ENCODE measurements at regions of chr22 and their contacts with region 1.

Region 1: GRCh38 chr22:50326959-50327710 is at the start of gene DENND6B:
- DNase-seq: peak; percentile 67 to 76 (median 72)
- H3K4me3 ChIP-seq: peak within 1 kb of the TSS; percentile 58 to 83 (median 71)
- H3K27ac ChIP-seq: peak within 1 kb of the TSS in 1 of 2 experiments; percentile 82
- H3K4me1 ChIP-seq: peaks cover 0 to 17% (median 15%) of the 10 kb centered on the region in 4 experiments
- H3K27me3 ChIP-seq: peaks cover 0 to 6% (median 0%) of the 10 kb centered on the region in 5 experiments

Region 2: DNA sequence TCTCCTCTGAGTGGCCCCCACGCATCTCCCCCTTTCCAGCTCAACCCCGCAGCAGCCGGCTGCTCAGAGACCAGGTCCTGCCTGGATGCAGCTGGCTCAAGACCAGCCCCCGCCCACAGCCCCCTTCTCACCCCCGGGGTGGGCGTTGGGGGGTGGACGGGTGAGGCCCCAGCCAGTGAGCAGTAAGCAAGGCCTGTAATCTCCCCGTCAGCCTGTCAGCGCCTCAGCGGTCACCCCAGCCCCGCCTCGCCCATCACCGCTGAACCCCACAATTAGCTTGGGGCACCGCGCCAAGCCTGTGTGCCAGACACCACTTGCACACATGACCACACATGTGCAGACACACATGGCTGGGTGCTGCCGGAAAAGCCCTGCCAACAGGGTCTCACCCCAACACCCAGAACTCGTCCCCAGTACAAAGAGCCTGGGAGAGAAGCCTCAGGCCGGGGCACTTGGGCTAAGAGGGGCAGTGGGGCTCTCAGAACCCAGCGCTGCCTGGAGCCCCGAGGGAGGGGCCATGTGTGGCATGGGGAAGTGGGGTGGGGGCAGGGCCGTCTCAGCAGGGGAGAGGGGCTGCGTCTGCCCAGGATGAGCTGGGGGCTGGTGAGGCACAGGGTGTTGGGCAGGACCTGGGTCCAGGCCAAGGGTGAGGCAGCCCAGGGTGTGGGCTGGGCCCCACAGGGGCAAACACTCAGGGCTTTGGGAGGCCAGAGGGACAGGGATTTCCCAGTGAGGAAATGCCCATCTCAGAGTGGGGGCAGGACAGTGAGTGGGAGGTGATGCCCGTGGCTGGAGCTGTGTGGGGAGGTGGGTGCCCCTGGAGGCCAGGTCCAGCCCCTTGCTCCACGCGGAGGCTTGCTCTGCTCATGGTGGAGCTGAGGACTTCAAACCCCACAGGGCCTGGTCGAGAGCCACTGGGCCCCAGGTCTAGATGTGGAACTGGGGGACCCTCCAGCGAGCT is 25.3 kb before region 1 on chr22:
- CTCF ChIA-PET with region 1: interaction called, 24 read pairs
- POLR2A ChIA-PET with region 1: interaction called, 6 read pairs
- DNase-seq: peak in 1 of 3 donors; percentile 58
- H3K4me3 ChIP-seq: peak overlapping the region in 1 of 7 experiments; percentile 4
- H3K27ac ChIP-seq: no peak overlapping the region
- H3K4me1 ChIP-seq: peaks cover 0 to 86% (median 78%) of the 10 kb centered on the region in 4 experiments
- H3K27me3 ChIP-seq: no peaks in the 10 kb centered on the region

Region 3: GRCh38 chr22:50306753-50307749 is 20.1 kb before region 1 on chr22 and contains the start of gene PLXNB2:
- CTCF ChIA-PET with region 1: interaction called, 24 read pairs
- POLR2A ChIA-PET with region 1: interaction called, 6 read pairs
- DNase-seq: peak; percentile 52 to 76 (median 71)
- H3K4me3 ChIP-seq: peak within 1 kb of the TSS; percentile 59 to 86 (median 80)
- H3K27ac ChIP-seq: peak within 1 kb of the TSS; percentile 40 to 71
- H3K4me1 ChIP-seq: peaks cover 0 to 75% (median 66%) of the 10 kb centered on the region in 4 experiments
- H3K27me3 ChIP-seq: no peaks in the 10 kb centered on the region

Region 4: DNA sequence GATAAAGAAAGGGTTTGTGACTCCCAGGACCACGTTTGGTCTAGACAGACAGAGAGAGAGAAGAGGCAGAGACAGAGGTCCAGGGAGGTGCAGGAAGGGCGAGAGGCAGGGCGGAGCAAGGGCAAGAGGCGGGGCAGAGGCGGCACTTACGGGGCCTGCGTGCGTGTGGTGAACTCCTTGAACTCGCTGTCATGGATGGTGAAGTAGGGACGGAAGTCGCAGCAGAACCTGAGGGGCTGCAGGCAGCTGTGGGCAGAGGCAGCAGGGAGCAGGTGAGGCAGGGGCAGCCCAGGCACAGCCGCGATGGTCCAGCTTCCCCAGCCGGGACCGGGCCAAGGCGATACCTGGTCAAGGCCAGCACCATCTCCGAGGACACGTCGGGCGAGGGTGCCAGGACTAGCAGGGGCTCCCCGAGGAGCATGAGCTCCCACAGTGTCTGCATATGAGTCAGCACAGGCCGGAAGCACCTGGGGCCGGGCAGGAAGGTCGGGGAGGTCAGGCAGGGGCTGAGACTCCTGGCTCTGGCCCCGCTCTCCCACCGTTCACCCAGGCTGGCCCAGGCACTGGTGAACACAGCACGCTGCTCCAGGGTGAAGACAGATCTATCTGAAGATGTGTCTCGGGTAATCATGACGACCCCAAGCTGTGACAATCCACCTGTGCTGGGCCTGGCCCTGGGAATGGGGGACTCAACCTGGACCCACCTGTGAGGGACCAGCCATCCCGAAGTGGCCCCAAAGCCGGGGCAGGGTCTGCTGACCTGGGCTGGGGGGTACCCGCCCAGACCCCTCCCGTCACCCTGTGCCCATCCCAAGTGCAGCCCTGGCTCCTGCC is 12.5 kb before region 1 on chr22:
- CTCF ChIA-PET with region 1: interaction called, 26 read pairs
- POLR2A ChIA-PET with region 1: interaction called, 17 read pairs
- DNase-seq: peak; percentile 78 to 95 (median 90)
- H3K4me3 ChIP-seq: peak overlapping the region; percentile 21 to 76 (median 50)
- H3K27ac ChIP-seq: peak overlapping the region; percentile 72 to 92
- H3K4me1 ChIP-seq: peaks cover 0 to 38% (median 34%) of the 10 kb centered on the region in 4 experiments
- H3K27me3 ChIP-seq: no peaks in the 10 kb centered on the region

Measured in common myeloid progenitor, CD34-positive (primary cell).